Sciatic nerve (tissue), 2 donors: ENCODE measurements at regions of chr13 and their contacts with region 1.

Region 1: DNA sequence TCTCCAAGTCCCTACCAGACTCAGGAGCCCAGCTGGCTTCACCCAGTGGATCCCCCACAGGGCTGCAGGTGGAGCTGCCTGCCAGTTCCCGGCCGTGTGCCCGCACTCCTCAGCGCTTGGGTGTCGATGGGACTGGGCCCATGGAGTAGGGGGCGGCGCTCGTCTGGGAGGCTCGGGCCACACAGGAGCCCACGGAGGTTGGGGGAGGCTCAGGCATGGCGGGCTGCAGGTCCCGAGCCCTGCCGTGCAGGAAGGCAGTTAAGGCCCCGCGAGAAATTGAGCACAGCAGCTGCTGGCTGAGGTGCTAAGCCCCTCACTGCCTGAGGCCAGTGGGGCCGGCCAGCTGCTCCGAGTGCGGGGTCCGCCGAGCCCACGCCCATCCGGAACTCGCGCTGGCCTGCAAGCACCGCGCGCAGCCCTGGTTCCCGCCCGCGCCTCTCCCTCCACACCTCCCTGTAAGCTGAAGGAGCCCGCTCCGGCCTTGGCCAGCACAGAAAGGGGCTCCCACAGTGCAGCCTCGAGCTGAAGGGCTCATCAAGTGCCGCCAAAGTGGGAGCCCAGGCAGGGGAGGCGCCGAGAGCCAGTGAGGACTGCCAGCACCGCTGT is 1771.1 kb downstream of the OLFM4 start:
- DNase-seq: no peak
- ATAC-seq: no peak

Region 2: DNA sequence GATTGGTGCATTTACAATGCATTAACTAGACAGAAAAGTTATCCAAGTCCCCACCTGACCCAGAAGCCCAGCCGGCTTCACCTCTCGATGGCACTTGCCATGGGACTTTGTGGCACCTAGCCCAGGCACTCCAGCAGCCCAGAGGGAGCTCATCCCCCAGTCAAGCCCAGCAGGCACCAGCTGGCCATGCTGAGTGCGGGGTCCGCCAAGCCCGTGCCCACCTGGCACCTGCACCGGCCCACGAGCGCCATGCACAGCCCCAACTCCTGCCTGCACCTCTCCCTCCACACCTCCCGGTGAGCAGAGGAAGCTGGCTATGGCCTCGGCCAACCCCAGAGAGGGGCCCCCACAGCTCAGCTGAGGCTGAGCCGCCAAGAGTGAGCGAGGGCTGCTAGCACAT is 12.0 kb before region 1 on chr13:
- intact Hi-C with region 1: loop called (anchors 1 kb)
- DNase-seq: no peak
- ATAC-seq: no peak